A549 (cell line): ENCODE measurements at regions of chr11 and their contacts with region 1.

Region 1: DNA sequence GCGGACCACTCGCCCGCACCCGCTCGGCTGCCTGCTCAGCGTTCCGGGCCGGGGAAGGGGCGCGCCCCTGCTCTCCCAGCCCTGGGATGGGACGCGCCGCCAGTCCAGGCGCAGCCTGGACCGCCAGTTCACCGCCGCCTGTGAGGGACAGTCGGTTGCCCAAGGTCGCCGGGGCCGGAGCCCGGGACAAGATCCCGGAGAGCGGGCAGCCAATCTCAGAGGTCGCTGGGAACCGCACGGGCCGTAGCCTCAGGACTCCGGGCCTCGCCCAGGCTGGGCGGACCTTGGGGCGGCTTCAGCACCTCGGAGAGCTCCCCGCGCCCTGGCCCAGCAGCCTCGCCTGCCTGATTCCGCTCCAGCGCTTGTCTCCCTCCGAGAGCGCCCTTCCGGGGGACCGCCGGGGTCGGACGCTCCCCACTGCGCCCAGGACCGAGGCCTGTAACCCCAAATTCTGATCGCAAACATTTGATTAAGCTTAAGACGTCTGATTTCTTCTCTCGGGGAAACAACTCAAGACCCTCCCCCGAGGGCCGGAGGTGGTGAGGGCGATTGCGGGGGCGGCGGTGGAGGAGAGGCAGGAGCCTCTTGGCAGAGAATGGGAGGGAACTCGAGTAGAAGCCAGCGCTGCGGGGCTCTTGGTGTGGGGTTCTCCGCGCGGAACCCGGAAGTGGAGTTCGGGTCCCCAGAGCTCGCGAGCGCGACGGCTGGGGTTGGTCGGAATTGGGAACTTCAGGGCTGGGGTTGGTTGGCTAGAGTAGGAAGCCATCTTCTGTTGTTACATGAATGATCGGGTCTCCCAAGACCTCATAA is 1.1 kb upstream of the CHRM4 start:
- DNase-seq: peak; percentile 74 to 87
- ATAC-seq: peak; percentile 52 to 73
- H3K4me3 ChIP-seq: peak overlapping the region; percentile 59
- H3K27ac ChIP-seq: peak overlapping the region in 1 of 2 experiments; percentile 63; a peak in 1 of 6 replicates
- H3K4me1 ChIP-seq: peaks cover 18% of the 10 kb centered on the region; the same call in 2 of the 3 replicates
- CTCF ChIP-seq: no peak
- EP300 ChIP-seq: no peak
- POLR2A ChIP-seq: no peak
- RAD21 ChIP-seq: no peak

Region 2: DNA sequence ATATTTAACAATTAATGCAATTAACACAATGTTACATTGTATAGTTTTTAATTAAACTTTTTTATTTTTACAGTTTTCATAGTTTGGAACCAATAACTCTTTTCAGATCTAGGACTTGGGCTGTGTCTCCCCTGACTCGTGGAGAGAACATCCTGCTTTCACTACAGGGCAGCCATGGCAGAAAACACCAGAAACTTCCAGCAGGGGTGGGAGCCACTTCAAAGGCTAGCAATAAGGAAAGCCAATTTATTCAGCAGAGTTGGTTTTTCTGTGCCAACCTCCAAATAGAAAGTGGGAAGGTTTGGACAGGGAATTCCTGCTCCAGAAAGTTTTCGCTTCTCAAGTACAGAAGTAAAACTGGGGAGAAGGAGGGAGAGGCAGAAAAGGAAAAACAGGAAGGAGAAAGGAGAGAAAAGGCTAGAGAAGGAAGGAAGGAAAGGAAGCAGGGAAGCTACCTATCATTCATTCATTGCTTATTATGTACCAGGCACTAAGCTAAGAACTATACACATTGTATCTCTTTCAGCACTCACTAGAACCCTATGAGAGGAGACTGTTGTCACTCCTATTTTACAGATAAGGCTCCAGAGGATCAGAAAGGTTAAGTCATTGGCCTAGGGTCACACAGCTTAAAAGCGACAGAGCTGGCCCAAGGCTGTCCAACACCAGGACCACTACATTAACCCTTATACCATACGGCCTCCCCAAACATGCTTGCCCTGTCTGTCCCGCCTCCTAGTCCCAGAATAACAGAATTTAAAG is 170.0 kb before region 1 on chr11:
- CTCF ChIA-PET with region 1: no interaction called
- POLR2A ChIA-PET with region 1: no interaction called
- DNase-seq: no peak
- ATAC-seq: peak; percentile 47 to 60; a peak in 2 of 6 replicates
- H3K4me3 ChIP-seq: no peak overlapping the region
- H3K27ac ChIP-seq: peak overlapping the region in 1 of 2 experiments; percentile 21; a peak in 1 of 6 replicates
- H3K4me1 ChIP-seq: no peaks in the 10 kb centered on the region
- CTCF ChIP-seq: no peak
- EP300 ChIP-seq: no peak
- POLR2A ChIP-seq: no peak
- RAD21 ChIP-seq: no peak

Region 3: DNA sequence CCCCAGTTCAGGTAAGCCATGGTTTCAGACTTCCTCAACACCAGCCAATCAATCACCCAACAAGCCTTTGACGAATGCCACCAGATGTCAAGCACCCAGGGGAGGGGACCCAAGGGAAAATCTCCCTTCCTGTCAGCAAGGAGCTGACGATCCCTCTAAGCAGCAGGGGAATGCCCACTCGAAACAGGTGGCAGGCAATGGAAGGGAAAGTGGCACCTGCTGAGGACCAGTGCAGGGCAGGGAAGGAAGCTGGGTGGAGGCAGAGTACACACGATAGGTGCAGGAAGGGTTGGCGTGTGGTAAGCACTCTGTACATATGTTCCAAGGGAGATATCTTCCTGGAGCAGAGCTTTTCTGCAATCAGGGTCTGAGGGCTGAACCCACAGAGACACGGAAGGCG is 126.9 kb before region 1 on chr11:
- CTCF ChIA-PET with region 1: no interaction called
- POLR2A ChIA-PET with region 1: no interaction called
- DNase-seq: no peak
- ATAC-seq: no peak
- H3K4me3 ChIP-seq: no peak overlapping the region
- H3K27ac ChIP-seq: no peak overlapping the region
- H3K4me1 ChIP-seq: no peaks in the 10 kb centered on the region
- CTCF ChIP-seq: no peak
- EP300 ChIP-seq: no peak
- POLR2A ChIP-seq: no peak
- RAD21 ChIP-seq: no peak

Region 4: GRCh38 chr11:46367244-46367915 is 25.2 kb before region 1 on chr11:
- CTCF ChIA-PET with region 1: interaction called, 220 read pairs
- POLR2A ChIA-PET with region 1: no interaction called
- DNase-seq: peak in 1 of 2 experiments; percentile 46
- ATAC-seq: peak; percentile 59 to 83
- H3K4me3 ChIP-seq: no peak overlapping the region
- H3K27ac ChIP-seq: 0 out of 6 replicates have a peak overlapping the region, but pooled peaks of 1 of the 2 experiments have one; percentile 30
- H3K4me1 ChIP-seq: peaks cover 10% of the 10 kb centered on the region
- CTCF ChIP-seq: peak; percentile 71
- EP300 ChIP-seq: no peak
- POLR2A ChIP-seq: no peak
- RAD21 ChIP-seq: peak; percentile 57 to 61; a peak in 4 of 5 replicates

Region 5: GRCh38 chr11:46404476-46405017 is 11.9 kb after region 1 on chr11:
- CTCF ChIA-PET with region 1: interaction called, 56 read pairs
- POLR2A ChIA-PET with region 1: no interaction called
- DNase-seq: no peak
- ATAC-seq: peak in 1 of 2 experiments; percentile 16; a peak in 2 of 6 replicates
- H3K4me3 ChIP-seq: no peak overlapping the region
- H3K27ac ChIP-seq: no peak overlapping the region
- H3K4me1 ChIP-seq: no peaks in the 10 kb centered on the region
- CTCF ChIP-seq: no peak
- EP300 ChIP-seq: no peak
- POLR2A ChIP-seq: no peak
- RAD21 ChIP-seq: no peak

Region 6: DNA sequence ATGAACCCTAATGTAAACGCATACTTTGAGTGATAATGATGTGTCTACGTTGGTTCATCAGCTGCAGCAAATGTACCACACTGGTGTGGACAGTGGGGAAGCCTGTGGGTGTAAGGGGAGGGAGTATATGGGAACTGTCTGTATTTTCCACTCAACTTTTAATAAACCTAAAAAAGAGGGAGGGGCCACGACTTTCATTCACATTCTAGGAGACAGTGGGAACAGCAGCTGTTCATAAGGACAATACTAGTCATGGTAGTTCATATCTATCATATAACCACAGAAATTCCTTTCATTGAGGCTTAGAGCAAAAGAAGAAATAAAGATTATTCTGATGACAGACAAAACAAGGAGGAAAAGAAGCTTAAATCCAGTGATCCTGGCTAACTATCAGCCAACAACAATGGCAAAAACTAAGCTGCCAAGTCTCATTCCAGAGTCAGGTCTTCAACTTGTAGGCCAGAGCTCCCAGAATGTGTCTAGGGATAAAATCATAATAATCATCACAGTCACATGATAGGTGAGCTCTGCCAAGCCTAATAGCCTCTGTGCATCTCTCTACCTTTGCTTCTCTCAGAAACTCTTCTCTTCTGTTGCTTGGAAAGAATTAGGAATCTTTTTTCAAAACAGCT is 58.3 kb after region 1 on chr11:
- CTCF ChIA-PET with region 1: interaction called, 11 read pairs
- POLR2A ChIA-PET with region 1: no interaction called
- DNase-seq: no peak
- ATAC-seq: no peak
- H3K4me3 ChIP-seq: no peak overlapping the region
- H3K27ac ChIP-seq: no peak overlapping the region
- H3K4me1 ChIP-seq: no peaks in the 10 kb centered on the region
- CTCF ChIP-seq: no peak
- EP300 ChIP-seq: no peak
- POLR2A ChIP-seq: no peak
- RAD21 ChIP-seq: no peak

Region 7: DNA sequence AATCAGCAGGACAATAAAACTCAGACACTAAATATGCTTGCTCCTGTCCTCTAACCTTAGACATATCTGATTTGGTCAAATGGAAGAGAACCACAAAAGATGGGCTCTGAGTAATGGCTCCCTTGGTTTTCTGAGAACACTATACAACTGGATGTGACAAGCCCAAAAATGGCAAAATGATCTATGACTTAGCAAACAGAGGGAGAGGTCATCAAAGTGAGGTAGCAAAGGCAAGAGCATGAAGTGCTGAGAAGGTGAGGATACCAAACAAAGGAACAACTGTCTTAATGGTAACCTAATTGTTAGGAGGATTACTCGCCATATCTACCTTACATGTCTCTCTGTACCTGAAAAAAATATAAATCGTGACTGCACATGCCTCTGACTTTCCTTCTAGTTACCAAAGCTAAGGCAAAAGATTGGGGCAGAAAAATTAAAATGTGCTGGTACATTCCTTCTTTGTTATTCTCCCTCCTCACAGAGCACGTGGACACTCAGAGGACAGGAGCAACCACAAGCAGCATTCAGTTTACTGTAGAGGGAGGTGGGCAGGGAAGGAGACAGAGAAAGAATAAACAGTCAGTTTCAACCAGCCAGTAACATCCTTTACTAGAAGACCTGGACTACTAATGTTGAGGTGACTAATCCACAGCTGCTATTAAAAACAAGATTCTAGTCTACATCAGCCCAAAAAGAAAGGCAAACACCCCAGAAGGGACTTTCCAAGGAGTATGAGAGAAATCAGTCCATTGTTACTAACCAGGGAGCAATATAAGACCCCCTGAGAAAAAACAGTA is 112.4 kb after region 1 on chr11:
- CTCF ChIA-PET with region 1: interaction called, 10 read pairs
- POLR2A ChIA-PET with region 1: no interaction called
- DNase-seq: no peak
- ATAC-seq: no peak; a peak in 1 of 6 replicates
- H3K4me3 ChIP-seq: no peak overlapping the region
- H3K27ac ChIP-seq: no peak overlapping the region
- H3K4me1 ChIP-seq: peaks cover 12% of the 10 kb centered on the region; the same call in 2 of the 3 replicates
- CTCF ChIP-seq: no peak
- EP300 ChIP-seq: no peak
- POLR2A ChIP-seq: no peak
- RAD21 ChIP-seq: no peak

Region 8: DNA sequence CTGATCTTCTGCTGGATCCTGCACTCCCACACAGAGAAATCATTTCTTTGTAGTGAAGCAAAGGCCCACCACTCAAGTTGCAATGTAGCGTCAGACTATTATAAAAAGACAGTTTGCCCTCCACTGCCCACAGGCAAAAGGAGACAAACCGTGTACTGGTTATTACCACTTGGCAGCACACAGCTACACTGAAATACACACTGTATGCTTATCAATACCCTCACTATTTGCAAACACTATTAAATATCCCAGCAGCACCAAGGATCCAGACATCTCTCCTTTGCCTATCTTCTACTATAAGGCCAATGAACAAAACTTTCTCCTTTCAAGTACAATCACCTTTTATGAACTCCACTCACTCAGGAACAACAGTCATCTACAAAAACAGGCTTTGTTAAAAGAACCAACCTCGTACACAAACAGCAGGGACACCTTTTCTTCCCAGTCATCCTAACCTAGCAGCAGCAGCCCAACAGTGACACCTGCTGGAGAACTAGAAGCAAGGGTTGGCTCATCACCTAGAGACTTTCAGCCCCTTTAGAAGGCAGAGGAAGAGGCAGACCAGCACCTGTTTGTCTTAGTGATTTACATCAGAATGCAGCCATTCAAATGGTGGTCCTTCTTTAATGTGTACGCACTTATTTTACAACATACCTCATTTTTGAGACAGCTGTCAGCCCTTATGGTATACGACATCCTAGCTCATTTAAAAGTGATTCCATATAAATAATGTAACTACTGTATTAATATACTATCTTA is 145.1 kb after region 1 on chr11:
- CTCF ChIA-PET with region 1: interaction called, 67 read pairs
- POLR2A ChIA-PET with region 1: no interaction called
- DNase-seq: peak; percentile 75 to 83
- ATAC-seq: peak; percentile 96
- H3K4me3 ChIP-seq: no peak overlapping the region
- H3K27ac ChIP-seq: no peak overlapping the region
- H3K4me1 ChIP-seq: 0 out of 3 replicates have a peak, but pooled peaks cover 4% of the 10 kb centered on the region
- CTCF ChIP-seq: peak; percentile 91
- EP300 ChIP-seq: no peak
- POLR2A ChIP-seq: no peak
- RAD21 ChIP-seq: peak; percentile 82 to 94

Region 9: DNA sequence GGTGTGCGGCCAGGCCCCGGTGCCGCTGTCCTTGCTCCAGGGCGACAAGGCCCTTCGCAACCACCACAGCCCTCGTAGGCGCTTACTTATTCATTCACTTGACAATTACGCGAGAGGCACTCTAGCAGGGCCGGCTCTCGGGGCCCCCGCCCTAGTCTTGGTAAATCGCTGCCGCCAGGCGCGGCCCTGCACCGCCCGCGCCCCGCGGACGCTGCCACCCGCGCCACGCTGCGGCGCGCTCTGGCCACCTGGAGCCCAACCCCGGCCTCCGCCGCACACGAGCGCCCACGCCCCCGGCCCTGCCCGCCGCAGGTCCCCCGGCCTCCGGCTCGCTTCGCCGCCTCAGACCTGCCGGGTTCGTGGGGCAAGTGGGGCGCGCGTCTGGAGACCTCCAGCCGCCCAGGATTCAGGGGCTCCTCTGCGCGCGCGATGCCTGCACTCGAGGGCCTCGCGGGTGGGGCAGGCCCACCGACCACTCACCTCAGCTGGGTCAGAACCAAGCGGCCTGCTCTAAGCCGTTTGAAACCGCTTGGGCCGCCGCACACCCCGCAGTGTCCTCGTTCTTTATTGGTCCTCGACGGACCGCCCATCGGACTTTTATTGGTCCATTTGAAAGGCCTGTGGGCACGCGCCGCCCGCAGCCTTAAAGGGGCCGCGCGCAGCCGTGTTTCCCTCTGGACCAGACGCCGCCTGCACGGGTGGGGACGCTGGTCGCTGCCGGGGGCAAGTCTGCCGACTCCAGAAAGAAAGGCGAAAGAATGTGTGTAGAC is 453.3 kb after region 1 on chr11 and contains the start of gene CKAP5:
- CTCF ChIA-PET with region 1: no interaction called
- POLR2A ChIA-PET with region 1: no interaction called
- DNase-seq: peak; percentile 92 to 98
- ATAC-seq: peak; percentile 98
- H3K4me3 ChIP-seq: peak within 1 kb of the TSS; percentile 81
- H3K27ac ChIP-seq: peak within 1 kb of the TSS; percentile 89 to 95
- H3K4me1 ChIP-seq: peaks cover 13% of the 10 kb centered on the region; the same call in 2 of the 3 replicates
- CTCF ChIP-seq: no peak
- EP300 ChIP-seq: no peak
- POLR2A ChIP-seq: peak; percentile 84
- RAD21 ChIP-seq: no peak
- polyA plus RNA-seq, gene CKAP5: 173 TPM in 2 replicates